IMR-90 (cell line): ENCODE measurements at regions of chr22 and their contacts with region 1.

Region 1: GRCh38 chr22:17552737-17553136 is 10.6 kb upstream of the SLC25A18 start:
- DNase-seq: no peak
- ATAC-seq: peak; percentile 21; the same call in 1 of the 2 replicates
- H3K4me3 ChIP-seq: no peak overlapping the region
- H3K27ac ChIP-seq: no peak overlapping the region
- H3K4me1 ChIP-seq: no peaks in the 10 kb centered on the region
- H3K27me3 ChIP-seq: peaks cover 14% of the 10 kb centered on the region
- CTCF ChIP-seq: no peak
- POLR2A ChIP-seq: no peak
- RAD21 ChIP-seq: no peak

Region 2: GRCh38 chr22:17501679-17502285 is 51.0 kb before region 1 on chr22:
- CTCF ChIA-PET with region 1: no interaction called
- POLR2A ChIA-PET with region 1: no interaction called
- dilution Hi-C with region 1: no loop called
- in situ Hi-C with region 1: no loop called
- intact Hi-C with region 1: no loop called
- DNase-seq: peak; percentile 66
- ATAC-seq: peak; percentile 93
- H3K4me3 ChIP-seq: no peak overlapping the region
- H3K27ac ChIP-seq: no peak overlapping the region
- H3K4me1 ChIP-seq: no peaks in the 10 kb centered on the region
- H3K27me3 ChIP-seq: no peaks in the 10 kb centered on the region; the same call in none of the 2 replicates
- CTCF ChIP-seq: peak; percentile 75
- POLR2A ChIP-seq: no peak
- RAD21 ChIP-seq: peak; percentile 83

Region 3: DNA sequence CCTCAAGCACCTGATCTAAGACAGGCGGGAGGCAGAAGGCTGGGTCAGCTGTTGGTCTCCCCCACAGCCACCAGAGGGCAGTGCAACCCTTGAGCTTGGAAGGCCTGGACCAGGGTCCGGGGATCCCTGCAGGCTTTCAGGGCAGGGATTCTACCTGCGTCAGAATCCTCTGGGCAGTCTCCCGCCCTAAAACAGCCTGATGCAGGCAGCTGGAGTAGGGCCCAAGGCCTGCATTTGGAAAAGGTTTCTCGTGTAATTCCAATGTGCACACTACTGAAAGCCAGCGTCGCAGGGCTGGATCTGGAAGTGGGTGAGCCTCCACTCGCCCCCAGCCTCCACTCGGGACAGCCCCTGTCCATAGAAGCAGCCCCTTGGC is 189.8 kb after region 1 on chr22:
- CTCF ChIA-PET with region 1: interaction called, 3 read pairs
- POLR2A ChIA-PET with region 1: no interaction called
- dilution Hi-C with region 1: no loop called
- in situ Hi-C with region 1: no loop called
- intact Hi-C with region 1: loop called (anchors 5 kb)
- DNase-seq: peak; percentile 66
- ATAC-seq: peak; percentile 85
- H3K4me3 ChIP-seq: no peak overlapping the region
- H3K27ac ChIP-seq: no peak overlapping the region
- H3K4me1 ChIP-seq: peaks cover 5% of the 10 kb centered on the region; the same call in 1 of the 2 replicates
- H3K27me3 ChIP-seq: no peaks in the 10 kb centered on the region
- CTCF ChIP-seq: peak; percentile 69
- POLR2A ChIP-seq: no peak
- RAD21 ChIP-seq: peak; percentile 81

Region 4: GRCh38 chr22:17785185-17786184 is 232.7 kb after region 1 on chr22:
- CTCF ChIA-PET with region 1: interaction called, 3 read pairs
- POLR2A ChIA-PET with region 1: no interaction called
- dilution Hi-C with region 1: no loop called
- in situ Hi-C with region 1: no loop called
- intact Hi-C with region 1: loop called (anchors 10 kb)
- DNase-seq: no peak
- ATAC-seq: no peak
- H3K4me3 ChIP-seq: no peak overlapping the region
- H3K27ac ChIP-seq: no peak overlapping the region
- H3K4me1 ChIP-seq: peaks cover 14% of the 10 kb centered on the region
- H3K27me3 ChIP-seq: no peaks in the 10 kb centered on the region
- CTCF ChIP-seq: peak; percentile 53
- POLR2A ChIP-seq: no peak
- RAD21 ChIP-seq: peak; percentile 49